ENCODE measurements at regions of chr3 and their contacts with region 1.

Region 1: GRCh38 chr3:138935848-138936740 is 10.8 kb downstream of the FOXL2 start:
- DNase-seq: peak; percentile 27
- ATAC-seq: peak; percentile 84
- H3K4me3 ChIP-seq: peak overlapping the region; percentile 22 to 71 (median 43)
- H3K27ac ChIP-seq: no peak overlapping the region
- H3K4me1 ChIP-seq: peaks cover 37% of the 10 kb centered on the region
- H3K27me3 ChIP-seq: peaks cover 20 to 64% of the 10 kb centered on the region in 2 experiments; a peak in 4 of 5 replicates
- CTCF ChIP-seq: peak; percentile 95
- EP300 ChIP-seq: no peak
- POLR2A ChIP-seq: no peak
- RAD21 ChIP-seq: peak; percentile 74

Region 2: DNA sequence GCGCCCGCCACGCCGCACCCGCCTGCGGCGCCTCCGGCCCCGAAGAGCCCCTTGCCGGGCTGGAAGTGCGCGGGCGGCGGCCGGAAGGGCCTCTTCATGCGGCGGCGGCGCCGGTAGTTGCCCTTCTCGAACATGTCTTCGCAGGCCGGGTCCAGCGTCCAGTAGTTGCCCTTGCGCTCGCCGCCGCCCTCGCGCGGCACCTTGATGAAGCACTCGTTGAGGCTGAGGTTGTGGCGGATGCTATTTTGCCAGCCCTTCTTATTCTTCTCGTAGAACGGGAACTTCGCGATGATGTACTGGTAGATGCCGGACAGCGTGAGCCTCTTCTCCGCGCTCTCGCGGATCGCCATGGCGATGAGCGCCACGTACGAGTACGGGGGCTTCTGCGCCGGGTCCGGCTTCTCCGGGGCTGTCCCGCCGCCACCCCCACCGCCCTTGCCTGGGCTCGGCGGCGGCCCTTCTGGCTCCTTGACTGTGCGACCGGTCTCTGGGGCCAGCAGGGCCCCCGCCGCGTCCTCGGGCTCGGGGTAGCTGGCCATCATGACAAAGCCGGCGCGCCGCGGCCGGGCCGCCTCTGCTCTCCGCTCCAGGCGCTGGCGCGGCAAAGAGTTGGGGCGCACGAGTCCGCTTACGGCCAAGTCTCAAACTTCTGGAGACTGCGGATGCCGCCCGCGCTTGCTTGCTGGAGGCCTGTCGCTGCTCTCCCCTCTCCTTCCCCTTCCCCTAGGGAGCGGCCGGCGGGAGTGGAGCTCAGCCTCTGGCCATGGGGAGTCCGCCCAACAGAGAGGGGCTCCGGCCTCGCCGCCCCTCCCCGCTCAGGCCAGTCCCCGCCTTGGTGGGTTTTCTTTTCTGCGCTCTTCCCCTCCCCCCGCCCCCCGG is 10.3 kb after region 1 on chr3:
- CTCF ChIA-PET with region 1: no interaction called
- POLR2A ChIA-PET with region 1: no interaction called
- in situ Hi-C with region 1: no loop called
- intact Hi-C with region 1: no loop called
- DNase-seq: no peak
- ATAC-seq: peak; percentile 4; the same call in 1 of the 3 replicates
- H3K4me3 ChIP-seq: peak overlapping the region in 1 of 3 experiments; percentile 53; a peak in 2 of 6 replicates
- H3K27ac ChIP-seq: no peak overlapping the region
- H3K4me1 ChIP-seq: peaks cover 15% of the 10 kb centered on the region
- H3K27me3 ChIP-seq: peaks cover 33 to 93% of the 10 kb centered on the region in 2 experiments
- CTCF ChIP-seq: no peak
- EP300 ChIP-seq: no peak
- POLR2A ChIP-seq: no peak
- RAD21 ChIP-seq: no peak

Region 3: GRCh38 chr3:138974462-138974861 is 38.4 kb after region 1 on chr3:
- CTCF ChIA-PET with region 1: interaction called, 16 read pairs
- POLR2A ChIA-PET with region 1: interaction called, 3 read pairs
- in situ Hi-C with region 1: loop called (anchors 5 kb)
- intact Hi-C with region 1: loop called (anchors 1 kb)
- DNase-seq: no peak
- ATAC-seq: no peak; the same call in 2 of the 3 replicates
- H3K4me3 ChIP-seq: no peak overlapping the region
- H3K27ac ChIP-seq: no peak overlapping the region
- H3K4me1 ChIP-seq: 0 out of 2 replicates have a peak, but pooled peaks cover under 1% of the 10 kb centered on the region
- H3K27me3 ChIP-seq: peaks cover 0 to 16% of the 10 kb centered on the region in 2 experiments; a peak in 2 of 5 replicates
- CTCF ChIP-seq: no peak
- EP300 ChIP-seq: no peak
- POLR2A ChIP-seq: no peak
- RAD21 ChIP-seq: no peak

Region 4: DNA sequence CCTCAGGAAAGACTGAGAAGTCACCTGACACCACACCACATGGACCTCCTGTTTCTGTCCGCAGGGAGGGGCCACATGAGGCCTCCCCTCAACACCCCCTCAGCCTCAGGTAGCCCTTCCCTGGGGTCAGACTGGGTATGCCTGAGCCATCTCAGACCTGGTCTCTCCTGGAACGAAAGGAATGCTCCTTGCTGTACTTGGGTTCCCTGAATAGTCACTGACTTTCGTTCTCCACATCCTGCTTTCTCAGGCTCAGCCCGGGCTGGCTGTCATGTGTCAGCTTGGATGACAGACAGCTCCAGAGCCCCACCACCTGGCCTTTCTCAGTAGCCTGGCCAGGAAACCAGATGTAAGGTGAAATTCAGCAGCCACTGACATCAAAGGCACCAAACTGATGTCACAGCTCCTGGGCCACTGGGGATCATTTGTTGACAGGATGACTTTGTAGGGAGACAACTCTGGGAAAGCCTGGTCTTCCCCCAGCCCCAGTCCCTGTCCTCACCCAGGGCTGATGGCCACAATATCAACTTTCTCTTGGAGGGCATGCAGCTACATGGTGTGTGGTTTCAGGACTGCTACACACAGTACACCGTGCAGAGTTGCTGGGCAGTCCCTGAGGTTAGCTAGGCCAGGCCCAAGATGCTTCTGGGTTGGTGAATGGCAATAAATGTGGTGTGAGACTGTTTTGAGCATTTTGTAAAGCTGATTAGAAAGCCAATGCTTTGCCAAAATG is 266.3 kb after region 1 on chr3:
- CTCF ChIA-PET with region 1: no interaction called
- POLR2A ChIA-PET with region 1: no interaction called
- in situ Hi-C with region 1: loop called (anchors 5 kb)
- intact Hi-C with region 1: no loop called
- DNase-seq: peak; percentile 46
- ATAC-seq: peak; percentile 99
- H3K4me3 ChIP-seq: no peak overlapping the region; a peak in 1 of 6 replicates
- H3K27ac ChIP-seq: no peak overlapping the region
- H3K4me1 ChIP-seq: no peaks in the 10 kb centered on the region
- H3K27me3 ChIP-seq: no peaks in the 10 kb centered on the region
- CTCF ChIP-seq: peak; percentile 77
- EP300 ChIP-seq: no peak
- POLR2A ChIP-seq: no peak
- RAD21 ChIP-seq: no peak; the same call in 1 of the 2 replicates

Region 5: DNA sequence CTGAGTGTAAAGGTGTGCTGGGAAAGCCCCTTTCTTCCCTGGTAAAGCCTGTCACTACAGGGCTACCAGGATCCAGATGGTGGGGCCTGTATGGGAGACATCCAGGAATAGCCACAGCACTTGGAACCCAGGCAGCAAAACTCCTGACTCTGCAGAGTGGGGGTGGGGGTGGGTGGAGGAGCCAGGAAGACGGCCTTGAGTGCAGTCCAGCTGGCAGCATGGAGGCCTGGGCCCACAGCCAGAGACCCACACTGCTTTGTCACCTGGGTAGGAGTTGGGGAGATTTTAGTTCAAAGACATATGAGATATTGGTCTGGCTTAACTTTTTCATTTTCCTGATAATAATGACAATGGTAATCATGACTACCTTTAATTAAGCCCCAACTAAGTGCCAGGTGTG is 291.1 kb after region 1 on chr3:
- CTCF ChIA-PET with region 1: no interaction called
- POLR2A ChIA-PET with region 1: no interaction called
- in situ Hi-C with region 1: no loop called
- intact Hi-C with region 1: no loop called
- DNase-seq: no peak
- ATAC-seq: no peak
- H3K4me3 ChIP-seq: no peak overlapping the region
- H3K27ac ChIP-seq: no peak overlapping the region
- H3K4me1 ChIP-seq: peaks cover 6% of the 10 kb centered on the region; the same call in 1 of the 2 replicates
- H3K27me3 ChIP-seq: no peaks in the 10 kb centered on the region
- CTCF ChIP-seq: no peak
- EP300 ChIP-seq: no peak
- POLR2A ChIP-seq: no peak
- RAD21 ChIP-seq: no peak

Region 6: DNA sequence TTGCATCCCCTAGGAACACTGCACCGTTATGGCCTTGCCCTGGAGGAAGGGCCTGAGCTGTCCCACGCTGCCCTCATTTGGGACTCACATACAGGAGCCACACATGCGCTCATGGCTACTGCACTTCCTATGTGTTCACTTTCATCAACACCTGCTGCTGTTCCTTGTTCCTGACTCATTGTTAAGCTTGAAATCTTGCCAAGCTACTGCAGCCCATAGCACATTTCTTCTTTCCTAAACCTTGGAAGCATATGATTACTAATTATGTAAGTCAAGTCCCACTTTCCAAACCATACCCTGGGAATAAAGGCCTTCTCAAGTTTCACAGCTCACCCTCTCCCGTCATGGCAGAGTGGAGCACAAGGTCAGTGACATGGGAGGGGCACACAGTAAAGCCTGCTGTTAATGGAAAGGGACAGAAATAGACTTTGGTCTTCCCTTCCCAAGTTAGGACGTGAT is 1306.8 kb after region 1 on chr3:
- CTCF ChIA-PET with region 1: no interaction called
- POLR2A ChIA-PET with region 1: no interaction called
- in situ Hi-C with region 1: no loop called
- intact Hi-C with region 1: loop called (anchors 5 kb)
- DNase-seq: no peak
- ATAC-seq: no peak
- H3K4me3 ChIP-seq: no peak overlapping the region
- H3K27ac ChIP-seq: no peak overlapping the region
- H3K4me1 ChIP-seq: no peaks in the 10 kb centered on the region
- H3K27me3 ChIP-seq: no peaks in the 10 kb centered on the region
- CTCF ChIP-seq: no peak
- EP300 ChIP-seq: no peak
- POLR2A ChIP-seq: no peak
- RAD21 ChIP-seq: no peak